Endothelial cell of umbilical vein (primary cell): ENCODE measurements at regions of chr17 and their contacts with region 1.

Region 1: GRCh38 chr17:40647624-40648383 is at the start of gene SMARCE1:
- DNase-seq: peak; percentile 83
- H3K4me3 ChIP-seq: peak within 1 kb of the TSS; percentile 62 to 100 (median 100)
- H3K27ac ChIP-seq: peak within 1 kb of the TSS; percentile 96
- H3K4me1 ChIP-seq: peaks cover 22% of the 10 kb centered on the region
- H3K27me3 ChIP-seq: no peaks in the 10 kb centered on the region
- CTCF ChIP-seq: no peak
- POLR2A ChIP-seq: peak; percentile 66
- total RNA-seq, gene SMARCE1: 120 and 127 TPM in 2 replicates

Region 2: DNA sequence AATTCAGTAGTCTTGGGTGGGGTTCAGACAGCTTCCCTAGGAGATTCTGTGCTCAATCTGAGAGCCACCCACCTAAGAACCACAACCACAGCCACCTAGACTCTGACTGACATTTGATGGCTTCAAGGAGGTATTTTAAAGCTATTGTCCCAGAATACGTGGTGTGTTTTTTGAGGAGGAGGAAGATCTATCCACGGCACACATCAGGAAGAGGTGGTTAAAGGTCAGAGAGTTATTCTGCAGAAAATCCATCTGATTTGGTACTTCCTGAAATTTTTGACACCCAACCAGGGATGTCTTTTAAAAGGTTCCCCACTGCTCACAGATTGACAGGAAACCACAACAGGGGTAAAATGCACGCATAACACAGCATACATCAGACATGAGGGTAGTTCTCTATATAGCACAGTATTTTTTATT is 25.3 kb before region 1 on chr17:
- CTCF ChIA-PET with region 1: interaction called, 11 read pairs
- POLR2A ChIA-PET with region 1: no interaction called
- dilution Hi-C with region 1: no loop called
- intact Hi-C with region 1: no loop called
- DNase-seq: no peak
- H3K4me3 ChIP-seq: no peak overlapping the region
- H3K27ac ChIP-seq: no peak overlapping the region
- H3K4me1 ChIP-seq: no peaks in the 10 kb centered on the region
- H3K27me3 ChIP-seq: no peaks in the 10 kb centered on the region
- CTCF ChIP-seq: no peak
- POLR2A ChIP-seq: no peak

Region 3: GRCh38 chr17:40818733-40819527 is 171.1 kb after region 1 on chr17:
- CTCF ChIA-PET with region 1: no interaction called
- POLR2A ChIA-PET with region 1: no interaction called
- dilution Hi-C with region 1: no loop called
- intact Hi-C with region 1: loop called (anchors 1 kb)
- DNase-seq: peak; percentile 77
- H3K4me3 ChIP-seq: peak overlapping the region; percentile 49 to 99 (median 98)
- H3K27ac ChIP-seq: peak overlapping the region; percentile 75
- H3K4me1 ChIP-seq: peaks cover 9% of the 10 kb centered on the region
- H3K27me3 ChIP-seq: no peaks in the 10 kb centered on the region
- CTCF ChIP-seq: no peak
- POLR2A ChIP-seq: peak; percentile 48